ENCODE measurements at regions of chr7 and their contacts with region 1.

Region 1: GRCh38 chr7:140475747-140476348 is 3.5 kb downstream of the MKRN1 start:
- DNase-seq: peak; percentile 46
- ATAC-seq: no peak
- H3K4me3 ChIP-seq: no peak overlapping the region
- H3K27ac ChIP-seq: no peak overlapping the region
- H3K4me1 ChIP-seq: peaks cover 28% of the 10 kb centered on the region
- H3K27me3 ChIP-seq: no peaks in the 10 kb centered on the region
- CTCF ChIP-seq: peak; percentile 59
- EP300 ChIP-seq: no peak
- POLR2A ChIP-seq: no peak
- RAD21 ChIP-seq: peak; percentile 43

Region 2: GRCh38 chr7:140375892-140376730 is 99.7 kb before region 1 on chr7:
- CTCF ChIA-PET with region 1: no interaction called
- POLR2A ChIA-PET with region 1: no interaction called
- in situ Hi-C with region 1: no loop called
- intact Hi-C with region 1: no loop called
- DNase-seq: no peak
- ATAC-seq: no peak
- H3K4me3 ChIP-seq: no peak overlapping the region
- H3K27ac ChIP-seq: no peak overlapping the region
- H3K4me1 ChIP-seq: no peaks in the 10 kb centered on the region
- H3K27me3 ChIP-seq: no peaks in the 10 kb centered on the region
- CTCF ChIP-seq: no peak
- EP300 ChIP-seq: no peak
- POLR2A ChIP-seq: no peak
- RAD21 ChIP-seq: no peak

Region 3: GRCh38 chr7:140494867-140495266 is 19.0 kb after region 1 on chr7:
- CTCF ChIA-PET with region 1: interaction called, 22 read pairs
- POLR2A ChIA-PET with region 1: no interaction called
- in situ Hi-C with region 1: no loop called
- intact Hi-C with region 1: loop called (anchors 1 kb)
- DNase-seq: peak; percentile 27
- ATAC-seq: peak; percentile 68
- H3K4me3 ChIP-seq: no peak overlapping the region
- H3K27ac ChIP-seq: no peak overlapping the region
- H3K4me1 ChIP-seq: 0 out of 2 replicates have a peak, but pooled peaks cover 7% of the 10 kb centered on the region
- H3K27me3 ChIP-seq: no peaks in the 10 kb centered on the region
- CTCF ChIP-seq: no peak
- EP300 ChIP-seq: no peak
- POLR2A ChIP-seq: no peak
- RAD21 ChIP-seq: no peak